ENCODE measurements at regions of chr16 and their contacts with region 1.

Region 1: GRCh38 chr16:46947900-46948547 is 25.4 kb downstream of the DNAJA2 start:
- DNase-seq: peak; percentile 71
- ATAC-seq: peak; percentile 80
- H3K4me3 ChIP-seq: peak overlapping the region; percentile 1 to 47 (median 15); a peak in 5 of 6 replicates
- H3K27ac ChIP-seq: peak overlapping the region; percentile 56
- H3K4me1 ChIP-seq: peaks cover 42% of the 10 kb centered on the region
- H3K27me3 ChIP-seq: no peaks in the 10 kb centered on the region
- CTCF ChIP-seq: peak; percentile 85
- EP300 ChIP-seq: no peak
- POLR2A ChIP-seq: no peak
- RAD21 ChIP-seq: peak; percentile 91

Region 2: GRCh38 chr16:46908540-46909372 is 39.3 kb before region 1 on chr16:
- CTCF ChIA-PET with region 1: no interaction called
- POLR2A ChIA-PET with region 1: no interaction called
- in situ Hi-C with region 1: no loop called
- intact Hi-C with region 1: no loop called
- DNase-seq: peak; percentile 71
- ATAC-seq: peak; percentile 36
- H3K4me3 ChIP-seq: no peak overlapping the region
- H3K27ac ChIP-seq: no peak overlapping the region
- H3K4me1 ChIP-seq: peaks cover 28% of the 10 kb centered on the region
- H3K27me3 ChIP-seq: no peaks in the 10 kb centered on the region
- CTCF ChIP-seq: peak; percentile 71
- EP300 ChIP-seq: no peak
- POLR2A ChIP-seq: no peak
- RAD21 ChIP-seq: peak; percentile 65

Region 3: GRCh38 chr16:46997844-46998243 is 49.8 kb after region 1 on chr16:
- CTCF ChIA-PET with region 1: no interaction called
- POLR2A ChIA-PET with region 1: no interaction called
- in situ Hi-C with region 1: no loop called
- intact Hi-C with region 1: no loop called
- DNase-seq: no peak
- ATAC-seq: no peak
- H3K4me3 ChIP-seq: no peak overlapping the region
- H3K27ac ChIP-seq: no peak overlapping the region
- H3K4me1 ChIP-seq: peaks cover 18% of the 10 kb centered on the region
- H3K27me3 ChIP-seq: no peaks in the 10 kb centered on the region; a peak in 1 of 5 replicates
- CTCF ChIP-seq: no peak
- EP300 ChIP-seq: no peak
- POLR2A ChIP-seq: no peak
- RAD21 ChIP-seq: no peak

Region 4: DNA sequence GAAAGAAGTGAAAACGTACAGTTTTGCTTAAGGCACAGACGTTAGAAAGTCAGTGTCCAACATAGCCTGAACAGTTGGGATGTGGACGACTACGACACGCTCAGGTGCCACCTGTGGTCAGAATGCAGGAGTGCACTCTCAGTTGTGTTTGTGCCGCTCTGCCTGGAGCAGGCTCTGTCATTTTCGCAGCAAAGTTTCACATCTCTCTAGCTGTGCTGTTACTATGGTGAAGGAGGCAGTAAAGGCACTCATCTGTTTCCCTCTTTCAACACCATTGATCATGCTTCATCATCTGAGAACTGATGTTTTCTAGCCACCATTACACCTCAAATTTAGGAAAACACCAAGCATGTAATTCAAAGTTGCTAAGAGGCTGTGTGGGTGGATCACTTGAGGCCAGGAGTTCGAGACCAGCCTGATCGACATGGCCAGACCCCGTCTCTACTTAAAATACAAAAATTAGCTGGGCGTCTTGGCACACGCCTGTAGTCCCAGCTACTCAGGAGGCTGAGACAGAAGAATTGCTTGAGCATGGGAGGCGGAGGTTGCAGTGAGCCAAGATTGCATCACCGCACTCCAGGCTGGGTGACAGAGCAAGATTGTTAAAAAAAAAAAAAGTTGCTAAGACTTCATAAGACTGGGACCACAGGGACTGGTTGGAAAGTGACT is 70.3 kb after region 1 on chr16:
- CTCF ChIA-PET with region 1: interaction called, 27 read pairs
- POLR2A ChIA-PET with region 1: no interaction called
- in situ Hi-C with region 1: loop called (anchors 5 kb)
- intact Hi-C with region 1: loop called (anchors 1 kb)
- DNase-seq: peak; percentile 73
- ATAC-seq: peak; percentile 100
- H3K4me3 ChIP-seq: no peak overlapping the region
- H3K27ac ChIP-seq: no peak overlapping the region
- H3K4me1 ChIP-seq: peaks cover 21% of the 10 kb centered on the region
- H3K27me3 ChIP-seq: peaks cover 0 to 8% of the 10 kb centered on the region in 2 experiments; a peak in 1 of 5 replicates
- CTCF ChIP-seq: peak; percentile 93
- EP300 ChIP-seq: no peak
- POLR2A ChIP-seq: no peak
- RAD21 ChIP-seq: peak; percentile 82

Region 5: DNA sequence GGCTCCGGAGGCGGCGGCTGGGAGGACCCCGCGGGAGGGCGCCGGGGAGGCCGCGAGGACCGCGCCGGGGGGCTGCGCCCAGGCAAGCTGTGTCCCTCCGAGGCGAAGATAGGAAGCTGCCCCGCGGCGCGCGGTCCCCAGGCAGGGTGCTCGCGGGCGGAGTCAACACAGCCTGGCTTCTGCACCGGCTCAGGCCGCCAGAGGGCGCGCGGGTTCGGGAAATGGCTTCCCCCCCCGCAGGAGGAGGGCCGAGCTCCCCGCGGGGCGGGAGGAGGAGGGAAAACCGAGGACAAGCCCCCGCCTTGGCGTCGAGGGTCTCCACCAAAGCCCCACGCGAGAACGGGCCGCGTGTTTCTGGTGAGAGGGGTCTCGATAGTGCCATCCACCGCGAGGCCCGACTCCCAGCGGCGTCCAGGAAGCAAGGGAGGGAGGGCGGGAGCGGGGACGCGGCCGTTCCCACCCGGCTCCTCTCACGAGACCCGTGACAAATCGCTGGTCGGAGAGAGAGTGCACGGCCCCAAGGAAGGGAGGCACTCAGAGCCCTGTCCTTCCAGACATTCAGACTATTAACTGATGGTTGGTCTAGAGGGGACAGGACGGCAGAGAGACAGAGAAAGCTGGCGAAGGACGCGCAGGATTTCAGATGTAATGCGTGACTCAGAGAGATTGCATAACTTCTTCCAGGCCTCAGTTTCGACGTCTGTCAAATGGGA is 89.9 kb after region 1 on chr16:
- CTCF ChIA-PET with region 1: interaction called, 17 read pairs
- POLR2A ChIA-PET with region 1: no interaction called
- in situ Hi-C with region 1: no loop called
- intact Hi-C with region 1: loop called (anchors 5 kb)
- DNase-seq: peak; percentile 61
- ATAC-seq: peak; percentile 96
- H3K4me3 ChIP-seq: peak overlapping the region; percentile 61 to 80 (median 80)
- H3K27ac ChIP-seq: no peak overlapping the region
- H3K4me1 ChIP-seq: peaks cover 30% of the 10 kb centered on the region
- H3K27me3 ChIP-seq: peaks cover 0 to 41% of the 10 kb centered on the region in 2 experiments; a peak in 4 of 5 replicates
- CTCF ChIP-seq: peak; percentile 98
- EP300 ChIP-seq: 0 out of 4 replicates have a peak, but pooled peaks of 1 of the 2 experiments have one; percentile 8
- POLR2A ChIP-seq: no peak
- RAD21 ChIP-seq: peak; percentile 96

Region 6: DNA sequence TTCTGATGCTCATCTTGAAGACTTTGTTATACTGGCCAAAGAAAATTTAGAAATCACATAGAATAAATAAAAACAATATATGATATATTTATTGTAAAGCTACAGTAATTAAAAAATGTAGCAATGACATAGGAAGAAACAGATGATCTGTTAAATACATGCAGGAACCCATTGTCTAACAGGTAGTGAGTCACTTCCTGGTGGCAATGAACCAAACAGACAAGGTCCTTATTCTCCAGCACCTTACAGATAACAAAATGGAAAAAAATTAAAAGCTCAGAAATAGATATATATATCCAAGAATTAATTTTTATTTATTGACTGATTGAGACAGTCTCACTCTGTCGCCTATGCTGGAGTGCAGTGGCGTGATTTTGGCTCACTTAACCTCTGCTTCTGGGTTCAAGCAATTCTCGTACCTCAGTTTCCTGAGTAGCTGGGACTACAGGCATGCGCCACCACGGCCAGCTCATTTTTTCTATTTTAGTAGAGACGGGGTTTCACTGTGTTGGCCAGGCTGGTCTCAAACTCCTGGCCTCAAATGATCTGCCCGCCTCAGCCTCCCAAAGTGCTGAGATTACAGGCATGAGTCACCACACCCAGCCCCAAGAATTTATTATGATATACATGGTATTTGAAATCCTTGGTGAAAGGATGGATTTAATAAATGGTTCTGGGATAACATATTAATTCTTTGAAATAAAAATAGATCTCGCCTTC is 188.2 kb after region 1 on chr16:
- CTCF ChIA-PET with region 1: interaction called, 13 read pairs
- POLR2A ChIA-PET with region 1: interaction called, 3 read pairs
- in situ Hi-C with region 1: loop called (anchors 10 kb)
- intact Hi-C with region 1: no loop called
- DNase-seq: peak; percentile 13
- ATAC-seq: no peak
- H3K4me3 ChIP-seq: no peak overlapping the region
- H3K27ac ChIP-seq: no peak overlapping the region
- H3K4me1 ChIP-seq: 0 out of 2 replicates have a peak, but pooled peaks cover under 1% of the 10 kb centered on the region
- H3K27me3 ChIP-seq: no peaks in the 10 kb centered on the region
- CTCF ChIP-seq: no peak
- EP300 ChIP-seq: no peak
- POLR2A ChIP-seq: no peak
- RAD21 ChIP-seq: no peak

Measured in HepG2 (cell line).